Activated B cell treated with CpG ODN at 0.5 μM for 24 hours (primary cell): ENCODE measurements at regions of chr2 and their contacts with region 1.

Region 1: GRCh38 chr2:28392297-28393113 is at the start of gene FOSL2:
- DNase-seq: peak; percentile 78
- ATAC-seq: peak; percentile 84
- H3K4me3 Mint-ChIP-seq: peak within 1 kb of the TSS; percentile 86
- H3K27ac Mint-ChIP-seq: peak within 1 kb of the TSS; percentile 89
- H3K4me1 Mint-ChIP-seq: peaks cover 17% of the 10 kb centered on the region
- H3K27me3 Mint-ChIP-seq: peaks cover 10% of the 10 kb centered on the region
- CTCF ChIP-seq: no peak
- total RNA-seq, gene FOSL2: 2.7 and 3.8 TPM in 2 replicates

Region 2: DNA sequence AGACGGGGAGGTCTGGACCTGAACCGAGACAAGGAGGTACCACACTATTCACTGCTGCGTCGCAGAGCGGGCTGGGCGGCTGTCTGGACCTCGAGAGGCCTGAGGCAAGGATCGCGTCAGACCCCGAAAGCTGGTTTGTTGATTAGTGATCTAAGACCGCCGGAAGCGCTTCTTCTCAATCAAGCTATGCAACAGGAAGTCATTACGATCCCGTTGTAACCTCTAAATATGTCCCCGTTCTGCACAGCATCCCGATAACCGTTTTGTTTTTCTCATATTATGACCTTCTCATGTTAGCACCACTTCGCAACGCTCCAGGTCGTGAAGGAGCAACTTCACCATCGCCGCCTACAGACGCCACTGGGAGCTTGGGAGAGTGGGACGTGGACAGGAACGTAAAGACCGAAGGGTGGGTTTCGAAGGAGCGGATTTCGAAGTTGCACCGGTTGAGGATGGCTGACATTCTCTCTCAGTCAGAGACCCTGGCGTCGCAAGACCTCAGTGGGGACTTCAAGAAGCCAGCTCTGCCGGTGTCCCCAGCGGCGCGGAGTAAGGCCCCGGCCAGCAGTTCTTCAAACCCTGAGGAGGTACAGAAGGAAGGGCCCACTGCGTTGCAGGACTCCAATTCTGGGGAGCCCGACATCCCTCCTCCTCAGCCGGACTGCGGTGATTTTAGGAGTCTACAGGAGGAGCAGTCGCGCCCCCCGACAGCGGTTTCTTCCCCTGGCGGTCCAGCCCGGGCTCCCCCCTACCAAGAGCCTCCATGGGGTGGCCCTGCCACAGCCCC is 728.8 kb before region 1 on chr2 and contains the starts of genes SLC4A1AP and SUPT7L:
- CTCF ChIA-PET with region 1: no interaction called
- POLR2A ChIA-PET with region 1: no interaction called
- intact Hi-C with region 1: loop called (anchors 1 kb)
- DNase-seq: peak; percentile 72
- ATAC-seq: peak; percentile 81
- H3K4me3 Mint-ChIP-seq: peak within 1 kb of the TSS; percentile 100
- H3K27ac Mint-ChIP-seq: peak within 1 kb of the TSS; percentile 99
- H3K4me1 Mint-ChIP-seq: peaks cover 46% of the 10 kb centered on the region
- H3K27me3 Mint-ChIP-seq: no peaks in the 10 kb centered on the region
- CTCF ChIP-seq: no peak
- total RNA-seq, gene SLC4A1AP: 21.4 and 22.0 TPM in 2 replicates
- total RNA-seq, gene SUPT7L: 28.1 and 30.9 TPM in 2 replicates

Region 3: GRCh38 chr2:27703638-27704341 is 688.7 kb before region 1 on chr2:
- CTCF ChIA-PET with region 1: interaction called, 8 read pairs
- POLR2A ChIA-PET with region 1: no interaction called
- intact Hi-C with region 1: loop called (anchors 1 kb)
- DNase-seq: peak; percentile 55
- ATAC-seq: peak; percentile 79
- H3K4me3 Mint-ChIP-seq: no peak overlapping the region
- H3K27ac Mint-ChIP-seq: no peak overlapping the region
- H3K4me1 Mint-ChIP-seq: peaks cover 3% of the 10 kb centered on the region
- H3K27me3 Mint-ChIP-seq: peaks cover 9% of the 10 kb centered on the region
- CTCF ChIP-seq: peak; percentile 75

Region 4: GRCh38 chr2:27771548-27772335 is 620.8 kb before region 1 on chr2 and contains the start of gene MRPL33:
- CTCF ChIA-PET with region 1: no interaction called
- POLR2A ChIA-PET with region 1: no interaction called
- intact Hi-C with region 1: loop called (anchors 5 kb)
- DNase-seq: peak; percentile 85
- ATAC-seq: peak; percentile 92
- H3K4me3 Mint-ChIP-seq: peak within 1 kb of the TSS; percentile 100
- H3K27ac Mint-ChIP-seq: peak within 1 kb of the TSS; percentile 98
- H3K4me1 Mint-ChIP-seq: peaks cover 30% of the 10 kb centered on the region
- H3K27me3 Mint-ChIP-seq: peaks cover 13% of the 10 kb centered on the region
- CTCF ChIP-seq: no peak
- total RNA-seq, gene MRPL33: 24.6 and 27.4 TPM in 2 replicates

Region 5: DNA sequence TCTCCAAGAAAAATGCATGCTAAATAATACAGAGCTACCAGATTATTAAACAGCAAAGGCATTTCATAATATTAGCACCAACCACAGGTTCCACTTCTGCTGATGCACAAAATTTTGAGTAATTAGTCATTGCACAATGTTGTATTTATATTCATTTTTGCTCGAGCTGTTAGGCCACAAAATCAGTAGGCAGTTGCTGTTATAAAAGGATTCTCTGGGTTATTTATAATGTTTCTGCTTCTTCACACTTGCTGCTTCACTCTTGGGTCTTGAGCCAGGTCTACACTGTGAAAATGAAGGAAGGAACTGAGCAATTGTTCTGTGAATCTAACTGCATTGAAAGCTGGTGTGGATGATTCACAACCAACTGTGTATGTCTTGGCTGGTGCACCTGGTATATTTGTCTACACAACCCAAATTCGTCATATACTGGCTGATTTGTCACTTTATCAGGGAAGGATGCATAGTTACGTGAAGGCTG is 582.7 kb before region 1 on chr2:
- CTCF ChIA-PET with region 1: interaction called, 3 read pairs
- POLR2A ChIA-PET with region 1: no interaction called
- intact Hi-C with region 1: loop called (anchors 2 kb)
- DNase-seq: no peak
- ATAC-seq: no peak
- H3K4me3 Mint-ChIP-seq: no peak overlapping the region
- H3K27ac Mint-ChIP-seq: no peak overlapping the region
- H3K4me1 Mint-ChIP-seq: no peaks in the 10 kb centered on the region
- H3K27me3 Mint-ChIP-seq: no peaks in the 10 kb centered on the region
- CTCF ChIP-seq: no peak

Region 6: GRCh38 chr2:27890146-27890923 is 502.2 kb before region 1 on chr2 and contains the starts of genes BABAM2 and RBKS:
- CTCF ChIA-PET with region 1: no interaction called
- POLR2A ChIA-PET with region 1: interaction called, 4 read pairs
- intact Hi-C with region 1: loop called (anchors 1 kb)
- DNase-seq: peak; percentile 93
- ATAC-seq: peak; percentile 78
- H3K4me3 Mint-ChIP-seq: peak within 1 kb of the TSS; percentile 99
- H3K27ac Mint-ChIP-seq: peak within 1 kb of the TSS; percentile 99
- H3K4me1 Mint-ChIP-seq: peaks cover 74% of the 10 kb centered on the region
- H3K27me3 Mint-ChIP-seq: peaks cover 2% of the 10 kb centered on the region
- CTCF ChIP-seq: no peak
- total RNA-seq, gene BABAM2: 51.9 and 55.6 TPM in 2 replicates
- total RNA-seq, gene RBKS: 2.5 and 3.1 TPM in 2 replicates

Region 7: DNA sequence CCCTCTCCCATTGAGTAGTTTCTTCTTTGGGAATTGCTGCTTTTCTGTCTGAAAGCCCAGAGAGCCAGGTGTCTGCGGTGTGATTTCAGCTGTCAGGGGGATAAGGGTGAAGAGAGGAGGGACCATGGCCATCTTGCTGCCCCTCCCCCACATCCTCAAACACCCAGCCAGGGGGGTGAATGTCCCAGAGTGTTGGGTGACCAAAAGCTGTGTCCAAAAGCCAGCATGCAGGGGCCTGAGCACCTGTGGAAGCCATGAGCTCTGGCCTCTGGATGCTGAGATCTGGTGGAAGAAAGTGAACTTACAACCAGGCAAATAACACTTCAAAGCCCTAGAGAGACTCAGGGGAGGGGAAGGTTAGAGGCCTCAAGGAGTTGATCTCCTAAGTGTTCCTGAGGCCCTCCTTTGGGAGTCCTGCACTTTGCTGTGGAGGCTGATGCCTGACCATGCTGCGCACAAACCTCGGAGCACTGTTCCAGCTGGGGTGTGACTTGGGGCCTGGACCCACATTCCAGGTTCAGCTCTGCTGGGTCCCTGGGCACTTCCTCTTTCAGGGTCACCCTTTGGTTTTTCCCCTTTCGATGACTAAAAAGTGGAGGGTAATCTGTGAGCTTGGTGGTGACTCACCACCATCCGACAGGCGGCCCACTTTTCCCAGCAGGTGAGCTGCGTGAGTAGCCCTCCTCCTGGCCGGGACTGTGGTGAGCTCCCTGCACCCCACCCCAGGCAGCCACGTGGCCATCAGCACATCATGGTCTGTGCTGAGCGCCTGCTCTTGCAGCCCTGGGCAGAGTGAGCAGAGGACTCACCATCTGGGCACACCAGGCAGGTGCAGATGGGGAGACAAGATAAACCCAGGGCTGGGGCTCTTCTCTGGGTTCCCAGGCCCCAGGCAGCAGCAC is 66.7 kb before region 1 on chr2:
- CTCF ChIA-PET with region 1: no interaction called
- POLR2A ChIA-PET with region 1: no interaction called
- intact Hi-C with region 1: no loop called
- DNase-seq: no peak
- ATAC-seq: peak; percentile 28
- H3K4me3 Mint-ChIP-seq: no peak overlapping the region
- H3K27ac Mint-ChIP-seq: no peak overlapping the region
- H3K4me1 Mint-ChIP-seq: peaks cover 4% of the 10 kb centered on the region
- H3K27me3 Mint-ChIP-seq: no peaks in the 10 kb centered on the region
- CTCF ChIP-seq: no peak

Region 8: DNA sequence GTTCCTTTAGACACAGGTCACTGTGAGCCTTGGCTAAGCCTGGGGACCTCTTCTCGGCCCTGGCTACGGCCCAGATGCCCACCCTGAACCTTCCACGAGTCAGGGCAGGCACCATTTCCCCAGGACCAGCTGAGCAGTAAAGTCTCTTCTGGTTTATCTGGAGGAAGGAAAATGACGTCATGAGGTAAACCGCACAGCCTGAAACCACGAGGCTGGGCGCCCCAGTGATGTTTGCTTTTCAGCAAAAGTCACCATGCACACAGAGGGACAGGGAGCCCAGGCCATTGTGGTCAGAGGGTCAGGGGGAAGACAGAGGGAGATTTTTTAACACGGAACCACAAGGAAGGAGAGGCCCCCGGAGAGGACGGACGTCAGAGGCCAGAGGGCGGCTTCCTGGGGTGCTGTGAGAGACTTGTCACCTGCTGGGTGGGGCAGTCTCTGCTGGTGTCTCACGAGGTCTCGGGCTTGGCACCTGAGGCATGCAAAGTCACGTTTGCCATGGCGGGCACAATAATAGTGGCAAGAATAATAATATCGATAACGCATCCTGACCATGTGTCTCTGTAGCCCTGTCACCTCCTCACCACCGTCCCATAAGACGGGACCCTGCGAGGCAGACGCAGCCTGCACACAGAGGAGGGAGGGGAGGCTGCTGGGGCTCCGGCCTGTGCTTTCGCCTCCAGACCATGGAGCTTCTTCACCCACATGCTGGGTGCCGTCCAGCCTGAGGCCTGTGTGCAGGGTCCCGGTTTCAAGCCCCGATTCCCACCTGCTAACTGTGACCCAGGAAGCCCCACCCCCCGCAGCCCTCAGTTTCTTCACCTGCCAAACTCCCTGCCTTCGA is 33.1 kb before region 1 on chr2:
- CTCF ChIA-PET with region 1: no interaction called
- POLR2A ChIA-PET with region 1: no interaction called
- intact Hi-C with region 1: loop called (anchors 1 kb)
- DNase-seq: peak; percentile 41
- ATAC-seq: peak; percentile 74
- H3K4me3 Mint-ChIP-seq: peak overlapping the region; percentile 74
- H3K27ac Mint-ChIP-seq: peak overlapping the region; percentile 42
- H3K4me1 Mint-ChIP-seq: peaks cover 22% of the 10 kb centered on the region
- H3K27me3 Mint-ChIP-seq: no peaks in the 10 kb centered on the region
- CTCF ChIP-seq: no peak